BJ (cell line): ENCODE measurements at regions of chr21 and their contacts with region 1.

Region 1: DNA sequence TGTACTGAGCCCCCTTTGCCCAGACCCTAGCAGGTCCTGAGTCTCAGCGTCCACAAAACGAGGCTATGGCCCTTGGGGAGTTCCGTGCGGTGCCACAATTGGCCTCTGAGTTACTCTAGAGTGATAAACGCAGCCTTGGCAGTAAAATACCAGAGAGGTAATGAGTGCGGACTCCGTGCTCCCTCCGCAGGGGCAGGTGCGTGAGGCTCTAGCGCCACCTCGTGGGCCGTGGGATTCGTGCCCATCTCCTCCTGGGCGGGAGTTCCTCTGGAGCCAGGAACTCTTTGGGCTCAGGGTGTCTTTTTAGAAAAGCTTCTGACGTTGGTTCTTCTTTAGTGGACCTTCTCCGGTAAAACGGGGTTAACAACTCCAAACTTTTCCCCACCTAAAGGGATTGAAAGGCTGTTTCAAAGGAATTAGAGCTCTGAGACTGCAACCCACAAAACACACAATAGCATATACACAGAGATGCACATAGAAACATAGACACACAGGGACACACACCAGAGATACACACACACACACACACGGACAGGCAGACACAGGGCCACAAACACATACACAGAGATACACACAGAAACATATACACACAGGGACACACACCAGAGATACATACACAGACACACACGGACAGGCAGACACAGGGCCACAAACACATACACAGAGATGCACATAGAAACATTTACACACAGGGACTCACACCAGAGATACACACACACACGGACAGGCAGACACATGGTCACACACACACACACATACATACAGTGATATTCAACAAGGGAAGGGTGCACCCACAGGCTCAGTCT is 99.4 kb downstream of the KCNJ15 start:
- DNase-seq: no peak
- H3K4me3 ChIP-seq: no peak overlapping the region
- H3K27me3 ChIP-seq: no peaks in the 10 kb centered on the region
- CTCF ChIP-seq: peak; percentile 99

Region 2: GRCh38 chr21:37711836-37712568 is 644.2 kb before region 1 on chr21:
- CTCF ChIA-PET with region 1: interaction called, 46 read pairs
- POLR2A ChIA-PET with region 1: interaction called, 3 read pairs
- DNase-seq: no peak
- H3K4me3 ChIP-seq: no peak overlapping the region
- H3K27me3 ChIP-seq: no peaks in the 10 kb centered on the region
- CTCF ChIP-seq: peak; percentile 94

Region 3: DNA sequence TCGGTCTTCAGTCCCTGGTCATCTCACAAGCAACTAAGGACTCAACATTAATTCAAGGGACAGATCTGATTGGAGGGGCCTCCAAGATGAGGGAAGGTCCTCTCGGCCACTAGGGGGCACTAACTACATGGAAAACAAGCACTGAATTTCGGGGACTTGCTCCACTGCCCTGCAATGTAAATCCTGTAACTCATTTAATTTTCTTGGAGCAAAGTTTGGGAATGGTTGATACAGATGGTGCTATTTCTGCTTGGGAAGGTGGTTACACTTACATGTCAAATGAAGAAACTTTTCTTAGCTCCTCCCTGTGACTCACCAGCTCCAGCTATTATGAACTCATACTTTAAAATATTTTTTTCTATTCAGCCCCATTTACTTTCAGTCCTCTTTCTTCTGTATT is 196.8 kb before region 1 on chr21:
- CTCF ChIA-PET with region 1: interaction called, 263 read pairs
- POLR2A ChIA-PET with region 1: no interaction called
- DNase-seq: peak; percentile 61
- H3K4me3 ChIP-seq: no peak overlapping the region
- H3K27me3 ChIP-seq: no peaks in the 10 kb centered on the region; the same call in 1 of the 2 replicates
- CTCF ChIP-seq: peak; percentile 77

Region 4: DNA sequence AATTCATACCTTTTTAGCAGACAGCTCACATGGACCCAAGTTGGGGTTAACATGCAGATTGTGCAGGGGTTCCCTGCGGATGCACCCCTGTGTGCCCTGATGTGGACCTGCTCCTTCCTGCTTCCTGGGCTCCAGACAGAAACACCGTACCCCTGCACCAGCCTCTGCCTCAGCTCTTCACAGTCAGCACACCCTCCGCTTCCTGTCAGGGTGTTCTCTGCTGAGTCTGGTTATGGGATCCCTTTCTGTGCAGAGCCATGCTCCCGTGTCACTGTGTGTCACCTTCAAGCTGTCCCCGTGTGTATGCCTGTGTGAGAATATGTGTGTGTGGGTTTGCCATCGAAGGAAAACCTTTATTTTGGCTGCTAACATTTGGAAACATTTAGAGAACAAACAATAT is 148.1 kb before region 1 on chr21:
- CTCF ChIA-PET with region 1: interaction called, 245 read pairs
- POLR2A ChIA-PET with region 1: no interaction called
- DNase-seq: no peak
- H3K4me3 ChIP-seq: no peak overlapping the region
- H3K27me3 ChIP-seq: peaks cover 10% of the 10 kb centered on the region
- CTCF ChIP-seq: no peak

Region 5: GRCh38 chr21:38303300-38303699 is 52.9 kb before region 1 on chr21:
- CTCF ChIA-PET with region 1: interaction called, 11 read pairs
- POLR2A ChIA-PET with region 1: no interaction called
- DNase-seq: peak; percentile 71
- H3K4me3 ChIP-seq: no peak overlapping the region
- H3K27me3 ChIP-seq: no peaks in the 10 kb centered on the region
- CTCF ChIP-seq: no peak

Region 6: DNA sequence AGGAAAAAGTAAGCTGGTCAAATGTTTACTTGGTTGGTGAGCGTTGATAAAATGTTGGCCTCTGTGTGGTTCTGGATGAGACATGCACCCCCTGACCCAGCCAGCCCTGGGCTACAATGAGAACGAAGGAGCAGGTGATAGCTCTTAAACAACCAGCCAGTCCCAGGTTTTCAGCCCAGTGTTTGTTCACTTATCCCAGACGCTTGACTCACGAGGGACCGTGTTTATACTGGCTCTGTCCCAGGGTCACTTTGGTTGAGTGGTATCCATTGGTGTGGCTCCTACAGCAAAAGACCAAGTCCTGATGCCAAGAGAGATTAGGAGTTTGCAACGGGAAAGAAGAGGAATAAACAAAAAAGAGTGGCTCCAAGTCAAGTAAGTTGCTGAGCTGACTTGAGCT is 12.5 kb before region 1 on chr21:
- CTCF ChIA-PET with region 1: interaction called, 13 read pairs
- POLR2A ChIA-PET with region 1: no interaction called
- DNase-seq: no peak
- H3K4me3 ChIP-seq: no peak overlapping the region
- H3K27me3 ChIP-seq: no peaks in the 10 kb centered on the region
- CTCF ChIP-seq: no peak

Region 7: DNA sequence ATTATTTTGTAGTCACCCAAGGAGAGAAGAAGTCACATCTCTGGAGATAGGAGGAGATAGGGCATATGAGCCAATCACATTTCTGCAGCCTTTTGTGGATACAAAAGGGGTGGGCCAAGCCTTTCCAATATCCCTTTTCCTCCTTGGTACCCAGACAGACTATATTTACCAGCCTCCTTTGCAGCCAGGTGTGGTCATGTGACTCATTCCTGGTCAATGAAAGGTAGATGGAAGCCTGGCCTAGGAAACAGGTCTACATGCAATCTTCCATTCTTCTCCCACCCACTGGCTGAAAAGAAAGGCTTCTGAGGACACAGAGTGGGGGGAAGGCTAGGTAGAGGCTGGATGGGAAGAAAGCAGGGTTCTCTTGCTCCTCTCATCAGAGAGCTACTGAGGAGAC is 200.2 kb after region 1 on chr21:
- CTCF ChIA-PET with region 1: no interaction called
- POLR2A ChIA-PET with region 1: no interaction called
- DNase-seq: no peak
- H3K4me3 ChIP-seq: no peak overlapping the region
- H3K27me3 ChIP-seq: peaks cover 1% of the 10 kb centered on the region
- CTCF ChIP-seq: no peak